Activated T-helper 2 cell treated with anti-CD3 and anti-CD28 coated beads, Interferon-gamma antibody, Interleukin-2, Interleukin-4, amounts not matched to agents 10 μg/mL and 5 μg/mL and 100 μg/mL, durations not matched to agents 14 hours and 24 hours and 36 hours (primary cell): ENCODE measurements at regions of chr12 and their contacts with region 1.

Region 1: DNA sequence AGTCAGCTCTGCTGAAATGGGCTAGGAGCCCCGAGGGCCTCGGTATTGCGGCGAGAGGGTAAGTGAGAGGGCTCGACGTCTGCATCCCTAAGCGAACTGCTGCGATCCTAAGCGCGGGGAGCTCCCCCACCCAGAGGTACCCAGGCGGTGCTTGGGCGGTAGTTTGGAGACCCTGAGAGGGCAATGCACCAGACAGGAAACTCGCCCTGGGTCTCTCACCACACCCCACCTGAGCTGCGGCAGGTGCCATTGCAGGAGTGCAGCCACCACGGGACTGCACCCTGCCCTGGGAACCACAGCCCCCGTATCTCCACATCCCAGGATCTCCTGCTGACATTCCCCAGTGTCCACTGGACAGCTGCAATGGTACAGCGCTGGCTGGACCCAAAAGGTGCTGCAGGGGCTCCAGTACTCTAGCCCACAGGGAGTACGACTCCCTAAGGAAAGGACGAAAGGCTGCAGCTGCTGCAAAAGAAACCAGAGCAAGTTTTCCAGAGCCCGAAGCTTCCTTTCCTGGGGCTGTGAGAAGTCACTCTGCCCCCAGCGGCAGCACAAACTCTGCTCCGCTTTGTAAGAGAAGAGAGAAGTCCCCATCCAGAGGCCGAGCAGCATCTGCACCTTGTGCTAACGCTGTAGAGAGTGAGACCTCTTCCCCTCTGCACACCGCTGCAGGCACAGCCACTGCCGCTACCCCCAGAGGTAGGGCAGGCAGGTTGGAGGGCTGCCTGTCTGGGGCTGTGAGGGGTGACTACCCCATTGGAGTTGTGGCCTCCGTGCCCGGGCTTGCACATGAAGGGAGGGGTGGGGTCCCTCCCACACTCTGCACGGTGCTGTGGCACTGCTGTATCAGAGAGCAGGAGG is 31.1 kb upstream of the MON2 start:
- DNase-seq: peak; percentile 18
- H3K4me3 Mint-ChIP-seq: peak overlapping the region; percentile 72
- H3K27ac Mint-ChIP-seq: no peak overlapping the region
- H3K4me1 Mint-ChIP-seq: peaks cover 19% of the 10 kb centered on the region
- H3K27me3 Mint-ChIP-seq: peaks cover 52% of the 10 kb centered on the region

Region 2: DNA sequence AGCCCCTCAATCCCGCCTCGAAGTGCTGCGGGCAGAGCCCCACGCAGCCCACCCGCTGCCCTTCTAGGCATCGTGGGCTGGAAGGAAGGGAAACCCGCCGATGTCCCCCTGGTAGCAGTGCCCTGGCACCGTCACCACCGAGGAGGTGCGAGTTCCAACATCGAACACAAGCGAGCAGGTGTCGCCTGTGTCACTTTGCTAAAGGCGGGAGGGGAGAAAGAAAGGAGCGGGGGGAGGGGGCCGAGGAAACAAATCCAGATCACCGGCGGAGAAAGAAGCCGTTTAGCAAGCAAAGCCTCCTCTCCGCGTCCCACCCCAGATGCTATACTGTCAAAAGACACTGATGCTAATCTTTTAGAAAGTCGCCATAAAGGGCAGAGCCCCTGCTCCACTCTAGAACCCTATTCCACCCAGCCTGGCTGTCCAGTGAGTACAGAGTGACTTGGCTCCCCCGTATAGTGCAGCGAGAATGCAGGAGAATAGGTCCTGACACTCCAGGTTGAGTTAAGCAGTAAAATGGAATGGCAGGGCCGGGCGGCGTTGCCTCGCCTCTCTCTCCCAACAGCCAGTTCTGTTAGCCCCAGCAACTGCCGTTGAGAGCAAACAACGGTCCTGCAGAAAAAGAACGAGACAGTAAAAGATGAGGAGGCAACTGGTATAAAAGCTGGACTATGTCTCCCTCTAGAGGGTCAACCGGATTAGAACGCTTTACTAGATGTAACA is 243.2 kb before region 1 on chr12:
- intact Hi-C with region 1: no loop called
- DNase-seq: peak; percentile 40
- H3K4me3 Mint-ChIP-seq: peak overlapping the region; percentile 75
- H3K27ac Mint-ChIP-seq: no peak overlapping the region
- H3K4me1 Mint-ChIP-seq: peaks cover 19% of the 10 kb centered on the region
- H3K27me3 Mint-ChIP-seq: peaks cover 60% of the 10 kb centered on the region

Region 3: DNA sequence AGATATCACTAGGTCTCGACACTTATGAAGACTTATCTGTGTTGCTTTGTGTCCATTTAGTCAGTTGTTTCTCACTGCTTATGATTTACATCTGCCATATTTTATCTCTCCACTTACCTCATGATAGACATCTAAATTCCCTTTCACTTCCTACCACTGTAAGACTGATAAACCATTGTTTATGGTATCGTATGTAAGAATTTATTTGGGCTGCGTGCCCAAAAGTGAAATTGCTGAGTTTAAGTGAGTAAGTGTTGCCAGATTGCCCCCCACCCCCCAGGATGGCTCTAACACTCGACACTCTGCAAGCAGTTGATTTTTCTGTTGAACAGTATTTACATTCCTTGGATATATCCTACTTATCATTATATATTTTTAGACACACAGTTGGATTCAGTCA is 38.8 kb before region 1 on chr12:
- intact Hi-C with region 1: no loop called
- DNase-seq: no peak
- H3K4me3 Mint-ChIP-seq: no peak overlapping the region
- H3K27ac Mint-ChIP-seq: no peak overlapping the region
- H3K4me1 Mint-ChIP-seq: peaks cover 6% of the 10 kb centered on the region
- H3K27me3 Mint-ChIP-seq: no peaks in the 10 kb centered on the region

Region 4: DNA sequence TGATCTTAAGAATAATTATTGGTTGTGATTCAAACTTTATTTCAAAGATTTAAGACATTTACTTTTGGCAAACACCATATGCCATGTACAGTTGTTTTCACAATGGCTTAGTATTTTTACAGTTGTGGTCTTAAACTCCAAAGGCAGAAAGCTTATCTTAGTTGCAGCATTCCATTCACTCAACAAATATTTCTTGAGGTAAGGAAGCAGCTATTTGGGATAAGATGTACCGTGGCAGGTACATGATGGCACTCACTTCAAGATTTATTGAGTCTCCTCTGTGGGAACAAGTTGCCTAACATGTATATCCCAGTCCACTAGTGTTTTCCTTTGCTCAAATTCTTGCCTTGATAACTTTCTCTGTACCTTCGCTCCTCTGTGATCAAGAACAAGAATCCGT is 23.1 kb after region 1 on chr12:
- intact Hi-C with region 1: no loop called
- DNase-seq: no peak
- H3K4me3 Mint-ChIP-seq: no peak overlapping the region
- H3K27ac Mint-ChIP-seq: no peak overlapping the region
- H3K4me1 Mint-ChIP-seq: no peaks in the 10 kb centered on the region
- H3K27me3 Mint-ChIP-seq: peaks cover 4% of the 10 kb centered on the region

Region 5: GRCh38 chr12:62581288-62582064 is 145.9 kb after region 1 on chr12:
- intact Hi-C with region 1: loop called (anchors 5 kb)
- DNase-seq: no peak
- H3K4me3 Mint-ChIP-seq: no peak overlapping the region
- H3K27ac Mint-ChIP-seq: no peak overlapping the region
- H3K4me1 Mint-ChIP-seq: no peaks in the 10 kb centered on the region
- H3K27me3 Mint-ChIP-seq: no peaks in the 10 kb centered on the region